Ascending aorta (tissue), 2 donors: ENCODE measurements at regions of chr9 and their contacts with region 1.

Region 1: GRCh38 chr9:115672477-115673316 is 480.9 kb upstream of the PAPPA start:
- DNase-seq: peak in 1 of 2 donors; percentile 77
- H3K4me3 ChIP-seq: no peak overlapping the region
- H3K27ac ChIP-seq: peak overlapping the region; percentile 81 to 86
- H3K4me1 ChIP-seq: peaks cover 9 to 36% of the 10 kb centered on the region in 2 donors
- H3K27me3 ChIP-seq: no peaks in the 10 kb centered on the region
- CTCF ChIP-seq: no peak

Region 2: DNA sequence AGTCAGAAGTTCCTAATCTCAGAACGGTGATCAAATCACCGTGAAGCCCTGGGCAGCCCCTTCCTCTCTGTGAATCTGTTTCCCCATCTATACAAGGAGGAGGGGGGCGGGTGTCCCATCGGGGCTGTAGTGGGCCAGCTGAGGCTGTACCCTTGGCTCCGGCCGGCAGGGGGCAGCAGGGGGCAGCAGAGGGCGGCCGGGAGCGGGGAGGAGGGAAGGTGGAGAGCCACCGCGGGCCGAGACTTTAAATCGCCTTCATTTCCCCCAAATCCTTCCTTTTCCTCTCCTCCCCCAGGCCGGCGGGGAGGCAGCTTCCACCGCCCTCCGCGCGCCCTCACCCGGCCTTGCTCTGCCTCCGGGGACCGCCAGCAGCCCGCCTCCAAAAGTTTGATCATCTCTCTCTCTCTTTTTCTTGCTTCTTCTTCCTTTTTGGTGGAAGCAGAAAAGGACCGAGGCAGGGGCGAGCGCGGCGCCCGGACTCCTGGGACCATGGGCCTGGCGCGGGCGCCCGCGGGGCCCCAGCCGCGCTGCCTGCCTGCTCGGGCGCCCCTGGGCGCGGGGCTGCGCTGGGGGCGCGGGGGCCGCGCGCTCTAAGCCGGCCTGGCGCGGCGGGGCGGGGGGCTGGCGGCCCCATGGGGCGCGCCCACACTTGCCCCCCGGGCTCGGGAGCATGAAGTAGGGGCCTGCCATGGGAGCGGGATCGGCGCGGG is 1517.3 kb before region 1 on chr9 and contains the start of gene COL27A1:
- intact Hi-C with region 1: no loop called
- DNase-seq: peak in 1 of 2 donors; percentile 92
- H3K4me3 ChIP-seq: peak within 1 kb of the TSS; percentile 49 to 91
- H3K27ac ChIP-seq: peak within 1 kb of the TSS; percentile 5 to 91
- H3K4me1 ChIP-seq: peaks cover 14 to 21% of the 10 kb centered on the region in 2 donors
- H3K27me3 ChIP-seq: peaks cover 6% of the 10 kb centered on the region
- CTCF ChIP-seq: peak; percentile 91 to 98 (median 91)
- total RNA-seq, gene COL27A1: 9.3 TPM

Region 3: GRCh38 chr9:115944166-115944948 is 271.7 kb after region 1 on chr9:
- intact Hi-C with region 1: loop called (anchors 1 kb)
- DNase-seq: peak in 1 of 2 donors; percentile 95
- H3K4me3 ChIP-seq: peak overlapping the region in 1 of 2 donors; percentile 10
- H3K27ac ChIP-seq: peak overlapping the region; percentile 83 to 90
- H3K4me1 ChIP-seq: peaks cover 0 to 18% of the 10 kb centered on the region in 2 donors
- H3K27me3 ChIP-seq: no peaks in the 10 kb centered on the region
- CTCF ChIP-seq: no peak